ENCODE measurements at regions of chr13 and their contacts with region 1.

Region 1: DNA sequence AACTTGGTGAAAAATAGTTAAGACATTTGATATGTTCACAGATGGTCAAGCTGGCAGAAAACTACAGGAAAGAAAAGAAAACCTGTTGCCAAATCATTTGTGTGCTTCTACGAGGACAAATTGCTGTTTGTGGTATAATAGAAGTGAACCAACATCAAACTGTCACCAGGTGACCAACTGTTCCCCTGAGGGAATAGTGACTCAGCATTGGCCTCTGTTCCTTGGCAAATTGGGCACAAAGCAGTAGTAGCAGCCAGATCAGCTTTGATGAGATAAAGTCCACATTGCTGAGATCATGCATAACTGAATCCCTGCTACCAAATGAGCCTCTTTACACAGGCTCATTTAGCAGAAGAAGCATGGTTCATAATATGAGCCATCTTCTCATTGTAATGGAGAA is 103.5 kb downstream of the POSTN start:
- DNase-seq: no peak
- H3K4me3 ChIP-seq: no peak overlapping the region
- H3K27ac ChIP-seq: peak overlapping the region in 1 of 2 donors; percentile 6
- H3K4me1 ChIP-seq: no peaks in the 10 kb centered on the region
- H3K27me3 ChIP-seq: no peaks in the 10 kb centered on the region
- CTCF ChIP-seq: no peak

Region 2: DNA sequence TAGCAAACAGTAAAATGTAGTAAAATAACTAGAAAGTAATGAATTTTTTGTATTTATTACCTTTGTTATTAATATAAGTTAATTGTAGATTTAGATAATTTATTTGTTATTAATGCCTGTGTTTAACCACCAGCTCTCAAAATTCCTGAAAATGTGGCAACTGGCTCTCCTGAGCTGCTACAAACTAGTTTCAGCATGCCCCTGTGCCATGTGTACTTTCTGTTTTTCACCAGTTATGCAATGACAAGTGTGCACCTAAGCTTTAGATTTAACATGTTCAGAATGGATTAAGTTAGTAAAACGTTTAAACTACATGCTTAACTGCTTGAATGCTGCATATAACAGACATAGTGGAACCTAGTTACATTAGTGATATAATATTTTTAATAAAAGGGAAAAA is 15.4 kb after region 1 on chr13:
- intact Hi-C with region 1: loop called (anchors 2 kb)
- DNase-seq: no peak
- H3K4me3 ChIP-seq: no peak overlapping the region
- H3K27ac ChIP-seq: no peak overlapping the region
- H3K4me1 ChIP-seq: no peaks in the 10 kb centered on the region
- H3K27me3 ChIP-seq: no peaks in the 10 kb centered on the region
- CTCF ChIP-seq: no peak

Region 3: DNA sequence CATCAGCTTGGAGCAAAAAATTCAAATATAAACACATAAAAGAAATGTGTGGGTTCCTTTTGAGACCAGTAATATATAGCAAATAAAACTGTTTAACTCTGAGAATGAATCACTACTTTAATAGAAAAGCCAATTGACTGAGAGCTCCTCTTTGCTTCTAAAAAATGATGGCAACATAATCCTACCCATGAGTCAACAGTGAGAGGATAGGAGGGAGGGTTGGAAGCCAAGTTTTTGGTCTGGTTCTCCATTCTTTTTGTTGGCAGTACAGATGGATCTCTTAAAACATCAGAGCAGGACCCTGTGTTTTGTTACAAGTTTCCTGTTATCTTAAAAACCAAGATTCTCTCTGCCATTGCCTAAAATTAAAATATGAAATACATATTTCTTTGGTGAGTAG is 153.6 kb after region 1 on chr13:
- intact Hi-C with region 1: no loop called
- DNase-seq: no peak
- H3K4me3 ChIP-seq: no peak overlapping the region
- H3K27ac ChIP-seq: no peak overlapping the region
- H3K4me1 ChIP-seq: no peaks in the 10 kb centered on the region
- H3K27me3 ChIP-seq: no peaks in the 10 kb centered on the region
- CTCF ChIP-seq: no peak